CD4-positive, alpha-beta memory T cell (primary cell): ENCODE measurements at regions of chr2 and their contacts with region 1.

Region 1: DNA sequence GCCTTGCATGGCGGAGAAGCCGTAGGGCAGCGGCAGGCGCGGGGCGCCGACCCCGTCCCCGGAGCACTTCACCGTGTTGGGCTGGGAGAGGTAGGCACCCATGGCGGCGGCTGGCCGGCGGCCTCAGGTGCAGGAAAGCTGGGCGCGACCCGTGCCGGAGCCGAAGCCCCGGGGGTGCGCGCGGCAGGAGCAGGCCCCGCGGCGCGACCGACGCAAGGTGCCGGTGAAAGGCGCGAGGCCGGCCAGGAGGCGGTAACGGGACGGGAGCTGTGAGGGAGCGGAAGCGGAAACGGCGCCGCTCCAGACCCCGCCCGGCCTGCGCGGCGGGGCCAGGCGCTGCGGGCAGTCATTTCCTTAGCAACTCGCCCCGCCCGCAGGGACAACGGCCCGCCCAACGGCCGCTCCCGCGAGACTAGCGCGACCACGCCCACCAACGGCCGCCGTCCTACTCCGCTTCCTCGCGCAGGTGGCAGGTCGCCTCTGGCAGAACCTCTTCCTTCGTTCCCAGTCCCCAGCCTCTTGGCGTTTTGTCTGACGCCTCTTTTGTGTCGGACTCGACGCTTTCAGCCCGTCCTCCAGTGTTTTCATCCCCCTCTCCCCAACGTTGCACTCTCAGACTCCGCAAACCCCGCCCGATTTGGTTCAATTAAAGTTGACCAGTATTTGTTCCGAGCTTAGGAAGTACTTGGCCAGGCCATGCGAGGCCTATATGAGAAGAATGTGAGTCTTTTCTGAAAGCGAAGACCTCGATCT is at the start of gene PPM1G:
- DNase-seq: peak; percentile 94 to 95 (median 94)
- H3K4me3 ChIP-seq: peak within 1 kb of the TSS; percentile 61 to 92
- H3K4me3 Mint-ChIP-seq: peak within 1 kb of the TSS; percentile 87 to 94 (median 90)
- H3K27ac ChIP-seq: peak within 1 kb of the TSS; percentile 85
- H3K27ac Mint-ChIP-seq: peak within 1 kb of the TSS; percentile 91 to 99 (median 96)
- H3K4me1 ChIP-seq: peaks cover 36% of the 10 kb centered on the region
- H3K4me1 Mint-ChIP-seq: peaks cover 25 to 47% (median 34%) of the 10 kb centered on the region in 4 donors
- H3K27me3 ChIP-seq: no peaks in the 10 kb centered on the region
- H3K27me3 Mint-ChIP-seq: peaks cover 1 to 2% of the 10 kb centered on the region in 2 donors
- total RNA-seq, gene PPM1G: 53.8 to 56.1 TPM

Region 2: DNA sequence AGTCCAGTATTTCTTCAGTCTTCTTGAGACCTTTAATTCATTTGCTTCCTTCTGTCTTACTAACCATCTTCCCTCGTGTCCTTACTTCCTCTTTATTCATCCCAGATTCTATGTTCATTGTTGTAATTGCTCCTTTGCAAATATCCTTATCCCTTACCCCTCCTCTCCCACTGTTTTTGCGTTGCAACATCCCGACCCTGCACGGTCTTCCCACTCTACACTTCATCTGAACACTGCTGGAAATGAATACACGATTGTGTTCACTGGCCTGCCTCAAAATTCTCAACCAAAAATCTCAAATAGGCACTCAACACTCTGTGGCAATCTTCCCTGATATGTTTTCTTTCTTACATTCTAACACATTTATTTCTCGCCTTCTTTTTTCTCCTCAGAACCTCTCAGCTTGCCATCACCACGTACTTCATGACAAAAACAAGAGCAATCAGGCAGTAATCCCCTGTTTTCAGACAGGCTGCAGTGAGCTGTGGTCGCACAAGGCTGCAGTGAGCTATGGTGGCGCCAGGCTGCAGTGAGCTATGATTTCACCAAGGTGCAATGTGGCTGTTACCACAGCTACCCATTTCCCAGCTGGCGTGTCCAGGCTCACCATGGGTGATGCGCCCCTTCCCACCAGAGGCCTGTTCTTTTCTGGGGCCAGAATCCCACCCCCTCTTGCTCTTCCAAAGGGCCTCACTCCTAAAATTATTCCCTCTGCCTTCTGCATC is 235.0 kb before region 1 on chr2:
- CTCF ChIA-PET with region 1: no interaction called
- POLR2A ChIA-PET with region 1: no interaction called
- intact Hi-C with region 1: no loop called
- DNase-seq: no peak
- H3K4me3 ChIP-seq: no peak overlapping the region
- H3K4me3 Mint-ChIP-seq: no peak overlapping the region
- H3K27ac ChIP-seq: no peak overlapping the region
- H3K27ac Mint-ChIP-seq: no peak overlapping the region
- H3K4me1 ChIP-seq: no peaks in the 10 kb centered on the region
- H3K4me1 Mint-ChIP-seq: peaks cover 4 to 6% (median 6%) of the 10 kb centered on the region in 4 donors
- H3K27me3 ChIP-seq: no peaks in the 10 kb centered on the region
- H3K27me3 Mint-ChIP-seq: peaks cover 24 to 28% of the 10 kb centered on the region in 2 donors

Region 3: DNA sequence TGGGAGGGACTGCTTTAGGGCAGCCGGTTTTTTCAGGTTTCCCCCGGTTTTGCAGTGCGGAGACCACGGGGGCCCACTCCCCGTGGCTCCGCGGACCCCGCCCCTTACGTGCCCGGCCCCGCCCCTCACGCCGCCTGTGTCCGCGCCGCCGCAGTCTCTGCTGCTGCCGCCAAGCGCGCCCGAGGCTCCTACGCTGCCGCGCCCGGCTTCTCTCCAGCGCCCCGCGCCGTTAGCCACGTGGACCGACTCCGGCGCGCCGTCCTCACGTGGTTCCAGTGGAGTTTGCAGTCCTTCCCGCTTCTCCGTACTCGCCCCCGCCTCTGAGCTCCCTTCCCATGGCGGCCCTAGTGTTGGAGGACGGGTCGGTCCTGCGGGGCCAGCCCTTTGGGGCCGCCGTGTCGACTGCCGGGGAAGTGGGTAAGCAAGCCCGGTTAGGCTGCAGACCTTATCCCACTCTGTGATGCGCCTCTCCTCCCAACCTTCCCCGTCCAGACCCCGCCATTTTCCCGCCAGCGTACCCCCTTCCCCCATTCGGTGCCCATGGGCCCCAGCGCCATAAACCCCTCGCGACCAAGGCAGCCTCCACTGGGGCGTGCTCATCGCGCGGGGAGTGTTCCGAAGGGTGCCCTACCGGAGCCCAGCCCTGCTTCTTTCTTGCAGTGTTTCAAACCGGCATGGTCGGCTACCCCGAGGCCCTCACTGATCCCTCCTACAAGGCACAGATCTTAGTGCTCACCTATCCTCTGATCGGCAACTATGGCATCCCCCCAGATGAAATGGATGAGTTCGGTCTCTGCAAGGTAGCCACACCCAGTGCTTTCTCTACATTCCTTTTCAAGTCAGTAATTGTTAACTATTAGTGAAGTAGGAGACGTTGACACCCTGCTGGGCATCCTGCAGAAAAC is 192.0 kb before region 1 on chr2 and contains the start of gene CAD:
- CTCF ChIA-PET with region 1: no interaction called
- POLR2A ChIA-PET with region 1: no interaction called
- intact Hi-C with region 1: loop called (anchors 10 kb)
- DNase-seq: peak; percentile 81 to 85 (median 82)
- H3K4me3 ChIP-seq: peak within 1 kb of the TSS; percentile 37 to 84
- H3K4me3 Mint-ChIP-seq: peak within 1 kb of the TSS; percentile 90 to 97 (median 95)
- H3K27ac ChIP-seq: peak within 1 kb of the TSS; percentile 78
- H3K27ac Mint-ChIP-seq: peak within 1 kb of the TSS; percentile 82 to 97 (median 94)
- H3K4me1 ChIP-seq: peaks cover 29% of the 10 kb centered on the region
- H3K4me1 Mint-ChIP-seq: peaks cover 26 to 42% (median 35%) of the 10 kb centered on the region in 4 donors
- H3K27me3 ChIP-seq: no peaks in the 10 kb centered on the region
- H3K27me3 Mint-ChIP-seq: no peaks in the 10 kb centered on the region
- total RNA-seq, gene CAD: 47.6 to 49.3 TPM

Region 4: GRCh38 chr2:27356382-27357181 is 52.9 kb before region 1 on chr2 and contains the start of gene GTF3C2:
- CTCF ChIA-PET with region 1: no interaction called
- POLR2A ChIA-PET with region 1: interaction called, 17 read pairs
- intact Hi-C with region 1: loop called (anchors 1 kb)
- DNase-seq: peak; percentile 93 to 97 (median 93)
- H3K4me3 ChIP-seq: peak within 1 kb of the TSS; percentile 49 to 75
- H3K4me3 Mint-ChIP-seq: peak within 1 kb of the TSS; percentile 96 to 100 (median 98)
- H3K27ac ChIP-seq: peak within 1 kb of the TSS; percentile 85
- H3K27ac Mint-ChIP-seq: peak within 1 kb of the TSS; percentile 96 to 100 (median 99)
- H3K4me1 ChIP-seq: peaks cover 51% of the 10 kb centered on the region
- H3K4me1 Mint-ChIP-seq: peaks cover 36 to 64% (median 48%) of the 10 kb centered on the region in 4 donors
- H3K27me3 ChIP-seq: no peaks in the 10 kb centered on the region
- H3K27me3 Mint-ChIP-seq: no peaks in the 10 kb centered on the region
- total RNA-seq, gene GTF3C2: 82.9 to 90.8 TPM